ENCODE measurements at regions of chr11 and their contacts with region 1.

Region 1: DNA sequence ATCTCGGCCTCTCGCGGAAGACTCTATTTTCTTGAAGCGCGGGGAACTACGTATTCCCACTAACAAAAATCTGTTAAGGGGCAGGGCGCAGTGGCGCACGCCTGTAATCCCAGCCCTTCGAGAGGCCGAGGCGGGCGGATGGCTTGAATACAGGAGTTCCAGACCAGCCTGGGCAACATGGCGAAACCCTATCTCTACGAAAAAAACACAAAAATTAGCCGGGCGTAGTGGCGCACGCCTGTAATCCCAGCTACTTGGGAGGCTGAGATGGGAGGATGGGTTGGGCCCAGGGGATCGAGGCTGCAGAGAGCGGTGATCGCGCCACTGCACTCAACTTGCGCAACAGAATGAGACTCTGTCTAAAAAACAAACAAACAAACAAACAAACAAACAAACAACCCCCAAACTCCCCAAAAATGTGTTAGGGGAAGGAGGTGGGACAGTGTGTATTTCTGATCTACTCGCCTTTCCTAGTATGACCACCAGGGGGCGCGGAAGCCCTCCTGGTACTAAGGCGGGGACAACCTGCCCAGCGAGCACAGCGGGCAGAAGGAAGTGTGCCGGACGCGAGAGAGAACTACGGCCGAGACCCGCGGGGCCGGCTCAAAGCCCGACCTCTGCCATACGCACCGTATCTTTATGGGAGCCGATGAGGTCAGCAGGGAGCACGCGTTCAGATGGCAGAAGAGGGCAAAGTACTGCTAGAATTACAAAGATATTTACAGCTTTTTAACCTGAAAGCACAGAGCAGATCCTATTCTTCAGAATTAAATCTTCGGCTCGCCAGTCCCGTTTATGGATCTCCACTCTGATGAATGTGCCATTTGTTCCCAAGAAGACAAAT is 1.3 kb upstream of the STX3 start:
- DNase-seq: peak; percentile 86 to 93 (median 89)
- ATAC-seq: peak; percentile 75 to 87 (median 81)
- H3K4me3 ChIP-seq: peak overlapping the region; percentile 74 to 99 (median 93)
- H3K27ac ChIP-seq: peak overlapping the region in 11 of 12 donors; percentile 94 to 98 (median 96)
- H3K4me1 ChIP-seq: peaks cover 0 to 21% (median 7%) of the 10 kb centered on the region in 12 donors
- H3K27me3 ChIP-seq: no peaks in the 10 kb centered on the region
- CTCF ChIP-seq: peak; percentile 88 to 98 (median 95)
- POLR2A ChIP-seq: peak in 1 of 2 donors; percentile 21

Region 2: DNA sequence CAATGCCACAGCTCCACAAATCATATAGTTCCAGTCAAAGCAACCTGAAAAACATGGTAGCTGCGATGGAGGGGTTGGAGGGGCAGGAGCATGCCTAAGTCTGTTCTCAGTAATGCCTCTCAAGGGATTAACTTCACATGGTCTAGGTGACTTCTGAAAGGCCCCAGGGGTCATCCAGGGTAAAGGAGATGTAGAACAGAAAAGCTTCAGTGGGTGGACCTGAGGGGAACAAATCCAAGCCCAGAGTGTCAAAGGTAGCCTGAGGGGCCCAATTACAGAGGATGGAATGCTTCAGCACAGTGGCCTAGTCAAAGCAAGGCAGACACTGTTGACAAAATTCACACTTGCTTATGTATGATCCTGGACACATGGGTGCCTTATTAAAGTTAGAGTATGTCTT is 219.2 kb before region 1 on chr11:
- intact Hi-C with region 1: loop called in 1 of 10 experiments (anchors 5 kb)
- DNase-seq: no peak
- ATAC-seq: no peak
- H3K4me3 ChIP-seq: no peak overlapping the region
- H3K27ac ChIP-seq: no peak overlapping the region
- H3K4me1 ChIP-seq: peaks cover 0 to 10% (median 0%) of the 10 kb centered on the region in 12 donors
- H3K27me3 ChIP-seq: no peaks in the 10 kb centered on the region
- CTCF ChIP-seq: no peak
- POLR2A ChIP-seq: no peak

Region 3: GRCh38 chr11:59560702-59561469 is 193.0 kb before region 1 on chr11:
- intact Hi-C with region 1: no loop called
- DNase-seq: peak; percentile 88 to 91 (median 90)
- ATAC-seq: peak; percentile 83 to 92 (median 88)
- H3K4me3 ChIP-seq: peak overlapping the region; percentile 70 to 96 (median 84)
- H3K27ac ChIP-seq: peak overlapping the region; percentile 59 to 92 (median 82)
- H3K4me1 ChIP-seq: peaks cover 0 to 37% (median 7%) of the 10 kb centered on the region in 12 donors
- H3K27me3 ChIP-seq: no peaks in the 10 kb centered on the region
- CTCF ChIP-seq: no peak
- POLR2A ChIP-seq: peak in 1 of 2 donors; percentile 24

Region 4: DNA sequence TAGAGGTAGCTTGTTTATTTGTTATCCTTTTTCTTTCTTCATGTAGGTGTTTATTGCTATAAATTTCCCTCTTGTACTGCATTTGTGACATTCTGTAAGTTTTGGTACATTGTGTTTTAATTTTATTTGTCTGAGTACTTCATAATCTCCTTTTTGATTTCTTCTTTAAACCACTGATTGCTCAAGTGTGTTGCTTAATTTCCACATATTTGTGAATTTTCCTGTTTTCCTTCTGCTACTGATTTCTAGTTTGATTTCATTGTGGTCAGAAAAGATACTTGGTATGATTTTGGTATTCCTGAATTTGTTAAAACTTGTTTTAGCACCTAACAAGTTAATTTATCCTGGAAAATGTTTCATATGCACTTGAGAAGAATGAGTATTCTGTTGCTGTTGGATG is 55.4 kb before region 1 on chr11:
- intact Hi-C with region 1: no loop called
- DNase-seq: no peak
- ATAC-seq: no peak
- H3K4me3 ChIP-seq: no peak overlapping the region
- H3K27ac ChIP-seq: no peak overlapping the region
- H3K4me1 ChIP-seq: no peaks in the 10 kb centered on the region
- H3K27me3 ChIP-seq: no peaks in the 10 kb centered on the region
- CTCF ChIP-seq: no peak
- POLR2A ChIP-seq: no peak

Region 5: GRCh38 chr11:59802639-59803176 is 48.8 kb after region 1 on chr11:
- intact Hi-C with region 1: loop called (anchors 1 to 2 kb)
- DNase-seq: peak in 2 of 5 donors; percentile 27 to 37
- ATAC-seq: peak; percentile 59 to 81 (median 72)
- H3K4me3 ChIP-seq: peak overlapping the region in 1 of 12 donors; percentile 35
- H3K27ac ChIP-seq: peak overlapping the region in 9 of 12 donors; percentile 34 to 69 (median 58)
- H3K4me1 ChIP-seq: peaks cover 0 to 18% (median 8%) of the 10 kb centered on the region in 12 donors
- H3K27me3 ChIP-seq: no peaks in the 10 kb centered on the region
- CTCF ChIP-seq: peak; percentile 45 to 85 (median 70)
- POLR2A ChIP-seq: no peak

Region 6: DNA sequence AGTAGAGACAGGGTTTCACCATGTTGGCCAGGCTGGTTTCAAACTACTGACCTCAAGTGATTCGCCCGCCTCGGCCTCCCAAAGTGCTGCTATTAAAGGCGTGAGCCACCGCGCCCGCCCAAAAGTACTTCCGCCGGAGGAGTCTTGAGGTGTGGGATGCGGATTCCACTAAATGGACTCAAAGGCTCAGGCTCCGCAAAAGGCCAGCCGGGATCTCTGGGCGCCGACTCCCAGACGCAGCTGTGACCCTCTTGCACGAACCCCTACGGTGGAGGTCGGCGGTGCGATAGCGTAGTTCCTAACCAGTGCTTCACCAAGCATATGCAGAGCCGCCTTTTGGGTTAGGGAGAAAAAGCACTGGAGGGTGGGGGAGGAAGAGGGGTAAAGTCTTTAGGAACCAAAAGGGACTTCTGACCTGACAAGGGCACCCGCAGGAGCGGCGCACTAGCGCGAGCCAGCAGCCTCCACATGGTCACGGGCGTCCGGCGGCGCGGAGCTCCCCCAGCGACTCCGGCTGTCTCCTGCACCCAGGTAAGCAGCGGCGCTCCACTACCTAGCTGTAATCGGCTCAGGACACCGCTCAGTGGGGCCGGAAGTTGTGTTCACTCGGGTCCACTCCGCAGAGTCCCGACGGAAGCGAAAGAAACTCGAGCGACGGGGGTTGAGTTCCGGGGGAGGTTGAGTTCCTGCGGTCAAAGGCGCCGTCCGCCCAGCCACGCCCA is 56.5 kb after region 1 on chr11 and contains the start of gene MRPL16:
- intact Hi-C with region 1: loop called in 1 of 10 experiments (anchors 2 kb)
- DNase-seq: peak; percentile 87 to 93 (median 89)
- ATAC-seq: peak; percentile 95 to 99 (median 98)
- H3K4me3 ChIP-seq: peak within 1 kb of the TSS; percentile 74 to 97 (median 90)
- H3K27ac ChIP-seq: peak within 1 kb of the TSS; percentile 63 to 91 (median 86)
- H3K4me1 ChIP-seq: peaks cover 0 to 22% (median 12%) of the 10 kb centered on the region in 12 donors
- H3K27me3 ChIP-seq: no peaks in the 10 kb centered on the region
- CTCF ChIP-seq: peak in 3 of 12 donors; percentile 14 to 27 (median 17)
- POLR2A ChIP-seq: peak in 1 of 2 donors; percentile 48
- total RNA-seq, gene MRPL16: 59.3 to 117 (median 84.9) TPM

Region 7: GRCh38 chr11:59918987-59919589 is 165.2 kb after region 1 on chr11:
- intact Hi-C with region 1: loop called in 1 of 10 experiments (anchors 10 kb)
- DNase-seq: no peak
- ATAC-seq: no peak
- H3K4me3 ChIP-seq: no peak overlapping the region
- H3K27ac ChIP-seq: no peak overlapping the region
- H3K4me1 ChIP-seq: no peaks in the 10 kb centered on the region
- H3K27me3 ChIP-seq: no peaks in the 10 kb centered on the region
- CTCF ChIP-seq: peak in 10 of 12 donors; percentile 8 to 47 (median 37)
- POLR2A ChIP-seq: no peak